Caco-2 (cell line): ENCODE measurements at regions of chr1 and their contacts with region 1.

Region 1: DNA sequence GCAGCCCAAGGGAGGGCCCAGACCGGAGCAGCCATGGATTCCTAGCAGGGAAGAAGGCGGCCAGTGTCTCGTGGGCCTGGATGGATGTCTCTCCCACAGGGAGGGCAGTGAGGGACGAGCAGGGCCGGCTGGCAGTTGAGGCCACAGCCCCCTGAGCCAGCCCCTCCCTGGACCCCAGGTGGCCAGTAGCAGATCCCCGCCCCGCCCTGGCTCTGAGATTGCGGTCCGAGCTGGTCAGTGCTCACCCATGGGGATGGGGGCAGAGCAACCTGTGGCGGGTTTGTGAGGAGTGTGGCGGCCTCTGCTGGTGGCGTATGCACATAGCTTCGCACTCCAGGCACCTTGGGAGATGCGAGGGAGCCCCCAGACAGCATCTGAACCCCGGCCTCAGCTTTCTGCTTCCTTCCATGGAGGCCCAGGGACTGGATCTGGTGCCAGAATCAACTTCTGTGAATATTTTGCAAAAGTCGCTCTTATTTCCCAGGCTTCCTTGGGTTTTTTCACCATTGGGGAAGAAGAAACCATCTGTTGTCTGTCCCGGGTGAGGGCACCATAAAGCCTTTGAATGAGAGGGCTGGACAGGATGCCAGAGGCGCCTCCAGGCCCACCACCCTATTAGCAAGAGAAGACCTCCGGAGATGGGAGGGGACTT is 8.4 kb upstream of the KCNN3 start:
- DNase-seq: peak; percentile 81 to 85
- H3K4me3 ChIP-seq: no peak overlapping the region
- H3K4me3 Mint-ChIP-seq: no peak overlapping the region
- H3K27ac Mint-ChIP-seq: no peak overlapping the region
- H3K4me1 ChIP-seq: peaks cover 12% of the 10 kb centered on the region
- H3K4me1 Mint-ChIP-seq: peaks cover 10% of the 10 kb centered on the region
- H3K27me3 ChIP-seq: no peaks in the 10 kb centered on the region
- H3K27me3 Mint-ChIP-seq: no peaks in the 10 kb centered on the region
- CTCF ChIP-seq: peak; percentile 84 to 91

Region 2: DNA sequence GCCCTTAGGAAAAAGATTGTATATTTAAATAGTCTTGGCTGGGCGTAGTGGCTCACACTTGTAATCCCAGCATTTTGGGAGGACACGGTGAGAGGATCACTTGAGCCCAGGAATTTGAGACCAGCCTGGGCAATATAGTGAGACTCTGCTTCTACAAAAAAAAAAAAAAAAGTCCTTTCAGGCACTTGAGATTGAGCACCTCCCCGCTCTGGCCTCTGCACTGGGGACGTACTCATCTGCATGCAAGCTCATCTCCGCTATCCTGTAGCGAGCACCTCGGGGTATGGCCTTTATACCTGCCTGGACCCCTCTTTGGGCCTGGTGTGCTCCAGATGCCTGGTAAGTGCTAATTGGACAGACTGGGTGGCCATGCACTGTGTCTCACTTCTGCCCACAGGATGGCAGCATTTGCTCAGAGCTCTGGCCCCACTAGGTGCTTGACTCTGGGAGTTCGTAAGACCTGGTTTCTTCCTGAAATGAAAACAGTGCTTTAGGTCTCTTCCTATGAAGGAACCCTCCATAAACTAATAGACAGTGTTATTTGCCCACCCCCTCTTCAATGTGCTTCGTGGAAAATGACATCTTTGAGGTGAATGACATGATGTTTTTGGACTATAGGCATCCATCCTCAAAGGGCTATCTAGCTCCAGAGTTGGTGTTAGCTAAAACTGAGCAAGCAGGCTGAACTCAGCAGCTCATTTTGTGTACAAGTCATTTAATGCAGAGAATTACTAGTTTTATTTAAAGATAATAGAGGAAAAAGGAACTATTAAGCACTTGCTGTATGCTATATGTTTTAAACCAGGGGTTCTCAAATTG is 208.8 kb before region 1 on chr1:
- CTCF ChIA-PET with region 1: interaction called, 17 read pairs
- POLR2A ChIA-PET with region 1: no interaction called
- intact Hi-C with region 1: loop called (anchors 1 kb)
- DNase-seq: peak; percentile 74 to 75
- H3K4me3 ChIP-seq: no peak overlapping the region
- H3K4me3 Mint-ChIP-seq: no peak overlapping the region
- H3K27ac Mint-ChIP-seq: no peak overlapping the region
- H3K4me1 ChIP-seq: no peaks in the 10 kb centered on the region
- H3K4me1 Mint-ChIP-seq: no peaks in the 10 kb centered on the region
- H3K27me3 ChIP-seq: no peaks in the 10 kb centered on the region
- H3K27me3 Mint-ChIP-seq: peaks cover 3% of the 10 kb centered on the region
- CTCF ChIP-seq: peak; percentile 77 to 87

Region 3: GRCh38 chr1:154765970-154766369 is 112.5 kb before region 1 on chr1:
- CTCF ChIA-PET with region 1: interaction called, 3 read pairs
- POLR2A ChIA-PET with region 1: no interaction called
- intact Hi-C with region 1: loop called (anchors 1 kb)
- DNase-seq: peak; percentile 52 to 53
- H3K4me3 ChIP-seq: no peak overlapping the region
- H3K4me3 Mint-ChIP-seq: no peak overlapping the region
- H3K27ac Mint-ChIP-seq: no peak overlapping the region
- H3K4me1 ChIP-seq: no peaks in the 10 kb centered on the region
- H3K4me1 Mint-ChIP-seq: peaks cover 13% of the 10 kb centered on the region
- H3K27me3 ChIP-seq: no peaks in the 10 kb centered on the region
- H3K27me3 Mint-ChIP-seq: peaks cover 20% of the 10 kb centered on the region
- CTCF ChIP-seq: peak; percentile 25 to 78

Region 4: DNA sequence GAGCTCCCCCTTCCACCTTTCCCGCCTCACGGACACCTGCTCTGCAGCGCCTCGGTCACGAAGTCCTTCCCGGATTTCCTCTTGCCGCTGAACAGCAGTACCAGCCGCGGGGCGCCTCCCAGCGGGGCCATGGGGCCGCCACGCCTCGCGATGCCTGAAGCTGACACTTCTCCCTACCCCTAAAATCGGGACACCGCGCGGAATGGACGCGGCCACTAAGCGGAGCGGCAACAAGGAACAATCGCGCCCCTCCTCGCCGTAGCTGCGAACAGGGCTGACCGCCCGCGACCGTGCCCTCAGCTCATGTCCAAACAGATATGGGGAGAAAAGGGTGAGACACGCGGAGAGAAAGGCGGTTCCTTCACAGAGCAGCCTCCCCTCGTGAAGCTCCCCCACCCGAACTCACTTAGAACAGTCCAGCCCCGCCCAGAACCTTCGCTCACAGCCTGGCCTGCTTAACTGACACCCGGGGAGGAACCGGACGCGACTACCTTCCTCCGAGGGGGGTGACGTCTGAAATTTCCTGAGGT is 58.1 kb after region 1 on chr1 and contains the start of gene PMVK:
- CTCF ChIA-PET with region 1: interaction called, 3 read pairs
- POLR2A ChIA-PET with region 1: no interaction called
- intact Hi-C with region 1: loop called (anchors 2 kb)
- DNase-seq: peak; percentile 97 to 98
- H3K4me3 ChIP-seq: peak within 1 kb of the TSS; percentile 72
- H3K4me3 Mint-ChIP-seq: peak within 1 kb of the TSS; percentile 87
- H3K27ac Mint-ChIP-seq: peak within 1 kb of the TSS; percentile 99
- H3K4me1 ChIP-seq: peaks cover 6% of the 10 kb centered on the region
- H3K4me1 Mint-ChIP-seq: peaks cover 17% of the 10 kb centered on the region
- H3K27me3 ChIP-seq: no peaks in the 10 kb centered on the region
- H3K27me3 Mint-ChIP-seq: no peaks in the 10 kb centered on the region
- CTCF ChIP-seq: peak in 1 of 2 experiments; percentile 62
- total RNA-seq, gene PMVK: 25.1 and 25.2 TPM in 2 replicates